ENCODE measurements at regions of chr11 and their contacts with region 1.

Region 1: DNA sequence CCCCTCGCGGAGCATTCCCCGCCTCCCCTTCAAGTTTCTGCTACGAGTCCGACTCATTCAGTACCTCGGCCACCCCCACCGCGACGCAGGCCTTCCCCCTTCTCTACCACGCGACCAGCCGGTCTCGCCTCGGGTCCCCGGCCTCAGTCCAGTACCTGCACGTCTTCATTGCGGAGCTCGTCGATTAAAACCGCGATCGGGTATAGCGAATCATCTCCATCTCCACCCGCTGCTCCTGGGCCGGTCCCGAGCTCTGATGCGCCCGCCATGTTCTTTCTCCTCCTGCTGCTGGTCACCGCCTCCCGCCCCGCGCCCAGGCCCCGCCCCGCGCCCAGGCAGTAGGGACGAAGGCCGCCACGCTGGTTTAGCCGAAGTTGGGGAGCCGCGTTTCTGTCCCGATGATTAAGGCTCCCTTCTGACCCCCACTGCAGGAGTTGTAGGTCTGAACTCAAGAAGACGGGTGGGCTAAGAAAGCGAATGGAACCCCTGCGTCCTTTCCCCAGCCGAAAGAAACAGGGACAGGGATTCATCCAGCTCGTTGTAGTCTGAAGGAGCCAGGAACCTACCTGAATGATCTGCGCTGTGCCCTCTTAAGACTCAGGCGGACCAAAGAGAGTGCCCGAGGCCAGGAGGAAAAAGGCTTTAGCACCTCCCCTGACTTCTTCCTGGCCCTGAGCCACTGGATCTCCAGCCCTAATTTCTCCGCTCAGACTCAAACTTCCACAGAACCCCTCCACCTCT is at the start of gene PPP2R1B:
- DNase-seq: peak; percentile 42
- ATAC-seq: peak; percentile 98
- H3K4me3 ChIP-seq: peak within 1 kb of the TSS; percentile 89 to 98 (median 93)
- H3K27ac ChIP-seq: peak within 1 kb of the TSS; percentile 94
- H3K4me1 ChIP-seq: peaks cover 38% of the 10 kb centered on the region
- H3K27me3 ChIP-seq: no peaks in the 10 kb centered on the region; a peak in 1 of 5 replicates
- CTCF ChIP-seq: no peak
- EP300 ChIP-seq: no peak
- POLR2A ChIP-seq: peak; percentile 83 to 87
- RAD21 ChIP-seq: no peak
- total RNA-seq, gene PPP2R1B: 56.8 and 93.9 TPM in 2 replicates

Region 2: DNA sequence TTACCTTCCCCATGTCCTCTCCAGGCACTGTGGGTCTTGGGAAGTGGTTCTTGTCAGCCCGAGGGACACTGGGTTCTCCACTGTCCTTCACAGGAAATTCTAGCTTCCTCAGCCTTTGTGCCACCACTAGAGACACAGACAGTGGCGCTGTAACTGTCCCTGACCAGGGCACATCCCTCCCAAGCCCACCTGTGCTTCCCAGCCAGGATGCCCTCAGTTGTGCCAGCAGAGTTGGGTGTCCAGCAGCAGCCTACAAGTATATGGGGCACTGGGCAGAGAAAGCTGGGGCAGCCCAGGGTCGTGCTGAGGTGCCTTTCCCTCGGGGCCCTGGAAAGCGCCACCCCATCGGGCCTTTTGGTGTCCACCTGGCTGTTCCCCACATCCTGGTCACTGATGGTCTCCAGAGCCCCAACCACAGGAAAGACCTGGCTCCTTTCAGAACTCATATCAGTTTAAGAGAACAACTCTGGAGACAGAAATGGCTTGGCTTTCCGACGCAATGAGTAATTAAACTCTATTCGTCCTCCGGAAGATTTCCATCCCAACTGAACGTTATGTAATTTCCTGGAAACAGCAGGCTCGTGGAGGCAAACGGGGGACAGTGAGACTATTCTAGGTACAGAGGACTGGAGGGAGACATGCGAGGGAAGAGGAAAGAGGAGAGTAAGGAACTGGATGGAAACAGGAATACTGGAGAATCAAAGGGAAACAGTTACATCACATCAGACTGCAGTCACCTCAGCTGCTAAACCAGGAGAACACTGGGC is 28.6 kb before region 1 on chr11:
- CTCF ChIA-PET with region 1: no interaction called
- POLR2A ChIA-PET with region 1: interaction called, 12 read pairs
- in situ Hi-C with region 1: no loop called
- intact Hi-C with region 1: loop called (anchors 1 kb)
- DNase-seq: no peak
- ATAC-seq: peak; percentile 15; the same call in 2 of the 3 replicates
- H3K4me3 ChIP-seq: no peak overlapping the region
- H3K27ac ChIP-seq: peak overlapping the region; percentile 59
- H3K4me1 ChIP-seq: peaks cover 21% of the 10 kb centered on the region
- H3K27me3 ChIP-seq: no peaks in the 10 kb centered on the region
- CTCF ChIP-seq: no peak
- EP300 ChIP-seq: no peak
- POLR2A ChIP-seq: no peak
- RAD21 ChIP-seq: no peak

Region 3: DNA sequence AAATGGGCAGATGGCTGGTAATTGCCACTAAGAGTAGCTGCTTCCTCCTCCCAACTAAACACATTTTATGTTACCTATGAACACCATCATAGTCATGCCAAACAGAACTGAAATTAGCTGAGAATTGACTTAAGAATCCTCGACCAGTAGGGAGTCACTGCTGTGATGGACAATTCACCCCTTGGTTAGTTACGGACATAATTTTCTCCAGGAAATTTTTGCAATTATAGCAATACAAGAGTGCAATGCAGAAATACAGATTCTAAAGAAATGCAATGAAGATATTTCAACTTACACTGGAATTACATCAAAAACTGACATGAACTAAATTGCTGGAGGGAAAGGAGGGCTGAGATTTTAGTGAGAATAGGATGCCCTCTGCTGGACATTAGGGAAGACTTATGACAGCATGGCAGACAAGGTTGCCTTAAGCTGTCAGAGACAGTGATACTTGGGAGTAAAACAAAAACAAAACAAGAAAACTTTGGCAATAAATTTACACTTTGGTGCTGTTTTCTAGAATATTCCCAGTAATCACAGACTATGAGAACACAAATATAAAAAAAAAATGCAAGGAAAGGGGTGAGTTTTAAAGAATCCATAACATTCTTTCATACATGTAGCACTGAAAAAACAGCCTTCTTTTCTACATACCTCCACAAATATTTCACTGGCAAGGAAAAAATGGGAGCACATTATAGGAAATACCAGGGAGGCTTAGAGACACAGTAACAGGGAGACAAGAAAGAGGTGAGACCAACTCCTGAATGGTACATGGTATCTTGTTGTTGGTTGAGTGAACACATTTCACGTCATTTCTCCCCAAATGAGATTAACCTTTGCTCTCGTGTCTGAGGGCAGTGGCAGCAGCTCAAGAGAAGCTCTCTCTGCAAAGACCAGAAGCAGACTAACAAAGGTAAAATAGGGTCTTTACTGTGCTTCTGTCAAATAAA is 11.1 kb after region 1 on chr11:
- CTCF ChIA-PET with region 1: no interaction called
- POLR2A ChIA-PET with region 1: interaction called, 68 read pairs
- in situ Hi-C with region 1: no loop called
- intact Hi-C with region 1: no loop called
- DNase-seq: peak; percentile 82
- ATAC-seq: peak; percentile 85
- H3K4me3 ChIP-seq: peak overlapping the region; percentile 17 to 62 (median 44); a peak in 4 of 6 replicates
- H3K27ac ChIP-seq: peak overlapping the region; percentile 85
- H3K4me1 ChIP-seq: peaks cover 63% of the 10 kb centered on the region
- H3K27me3 ChIP-seq: no peaks in the 10 kb centered on the region
- CTCF ChIP-seq: peak; percentile 86
- EP300 ChIP-seq: peak in 1 of 2 experiments; percentile 47; a peak in 2 of 4 replicates
- POLR2A ChIP-seq: 0 out of 4 replicates have a peak, but pooled peaks of 1 of the 2 experiments have one; percentile 39
- RAD21 ChIP-seq: peak; percentile 69

Region 4: DNA sequence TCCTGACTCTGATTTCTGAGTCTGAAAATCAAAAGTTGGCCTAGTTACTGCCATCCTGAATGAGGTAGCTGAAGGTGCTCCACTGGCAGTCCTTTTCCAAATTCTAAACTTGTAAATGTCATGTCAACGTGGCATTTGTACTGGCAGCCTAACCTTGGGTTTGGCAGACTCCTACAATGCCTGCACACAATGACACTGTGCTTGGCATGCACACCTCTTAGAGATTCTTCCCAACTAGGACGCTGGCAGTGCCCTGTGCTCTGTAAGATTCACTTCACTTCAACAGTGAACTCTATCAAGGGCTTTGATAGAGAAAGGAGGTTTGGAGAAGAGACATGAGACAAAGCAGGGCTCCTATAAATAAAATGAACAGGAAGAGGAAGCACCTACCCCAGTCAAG is 21.8 kb after region 1 on chr11:
- CTCF ChIA-PET with region 1: no interaction called
- POLR2A ChIA-PET with region 1: interaction called, 20 read pairs
- in situ Hi-C with region 1: no loop called
- intact Hi-C with region 1: no loop called
- DNase-seq: no peak
- ATAC-seq: no peak
- H3K4me3 ChIP-seq: no peak overlapping the region
- H3K27ac ChIP-seq: peak overlapping the region; percentile 10
- H3K4me1 ChIP-seq: peaks cover 87% of the 10 kb centered on the region
- H3K27me3 ChIP-seq: no peaks in the 10 kb centered on the region
- CTCF ChIP-seq: no peak
- EP300 ChIP-seq: no peak
- POLR2A ChIP-seq: no peak
- RAD21 ChIP-seq: no peak